Naive thymus-derived CD4-positive, alpha-beta T cell (primary cell): ENCODE measurements at regions of chr11 and their contacts with region 1.

Region 1: DNA sequence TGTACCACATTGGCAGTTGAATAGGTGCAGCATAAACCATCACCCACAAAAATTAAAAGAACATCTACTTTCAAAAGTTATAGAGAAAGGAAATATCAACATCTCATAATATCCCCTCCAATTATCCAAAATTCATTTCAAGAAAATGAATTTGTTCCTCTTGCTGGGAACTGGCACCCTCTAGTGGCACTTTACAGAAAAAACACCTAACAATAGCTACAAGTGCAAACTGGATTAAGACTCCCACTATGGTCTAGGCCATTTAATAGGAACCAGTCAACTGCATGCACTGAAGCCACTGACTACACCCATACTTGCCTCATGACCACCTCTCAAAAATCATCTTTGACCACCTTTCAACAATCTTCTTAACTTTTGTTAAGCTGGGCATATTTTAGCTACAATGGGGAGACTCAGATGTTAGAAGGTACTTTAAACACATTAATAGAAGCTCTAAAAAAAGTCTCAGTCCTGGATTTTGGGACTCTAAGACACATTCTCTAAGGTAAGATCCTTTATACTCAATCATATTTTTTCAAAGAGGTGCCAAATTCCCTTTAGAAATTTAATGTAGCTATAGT is 17.3 kb downstream of the TRAF6 start:
- DNase-seq: peak in 7 of 9 donors; percentile 11 to 48 (median 36)
- ATAC-seq: peak; percentile 81
- H3K4me3 ChIP-seq: no peak overlapping the region
- H3K4me3 Mint-ChIP-seq: no peak overlapping the region
- H3K27ac ChIP-seq: no peak overlapping the region
- H3K27ac Mint-ChIP-seq: peak overlapping the region in 4 of 9 donors; percentile 7 to 53 (median 44)
- H3K4me1 ChIP-seq: peaks cover 0 to 8% of the 10 kb centered on the region in 2 donors
- H3K4me1 Mint-ChIP-seq: peaks cover 17 to 42% (median 28%) of the 10 kb centered on the region in 7 donors
- H3K27me3 ChIP-seq: no peaks in the 10 kb centered on the region
- H3K27me3 Mint-ChIP-seq: no peaks in the 10 kb centered on the region

Region 2: DNA sequence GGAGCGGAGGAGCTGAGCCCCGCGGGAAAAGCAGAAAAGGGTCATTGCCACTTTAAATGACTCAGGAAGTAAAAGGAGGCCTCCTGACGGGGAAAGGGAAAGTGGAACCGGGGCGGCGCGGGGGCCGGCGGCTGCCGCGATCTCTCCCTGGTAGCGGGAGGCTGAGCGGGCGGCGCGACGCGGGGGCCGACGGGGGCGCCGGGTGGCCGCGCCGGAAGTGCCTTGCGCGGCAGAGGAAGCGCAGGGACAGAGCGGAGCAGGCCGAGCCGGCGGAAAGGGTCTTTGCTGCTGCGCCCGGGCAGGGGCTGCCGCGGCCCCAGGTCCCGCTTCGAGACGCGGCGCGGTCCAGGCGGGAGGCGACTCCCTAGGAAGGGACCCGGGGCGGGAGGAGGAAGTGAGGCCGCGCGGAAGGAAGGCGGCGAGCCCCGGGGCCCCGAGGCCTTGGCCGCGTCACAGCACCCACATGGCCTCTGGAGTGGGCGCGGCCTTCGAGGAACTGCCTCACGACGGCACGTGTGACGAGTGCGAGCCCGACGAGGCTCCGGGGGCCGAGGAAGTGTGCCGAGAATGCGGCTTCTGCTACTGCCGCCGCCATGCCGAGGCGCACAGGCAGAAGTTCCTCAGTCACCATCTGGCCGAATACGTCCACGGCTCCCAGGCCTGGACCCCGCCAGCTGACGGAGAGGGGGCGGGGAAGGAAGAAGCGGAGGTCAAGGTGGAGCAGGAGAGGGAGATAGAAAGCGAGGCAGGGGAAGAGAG is 830.0 kb before region 1 on chr11 and contains the start of gene TRIM44:
- CTCF ChIA-PET with region 1: no interaction called
- POLR2A ChIA-PET with region 1: no interaction called
- intact Hi-C with region 1: loop called in 1 of 2 experiments (anchors 5 kb)
- DNase-seq: peak; percentile 69 to 85 (median 82)
- ATAC-seq: peak; percentile 89
- H3K4me3 ChIP-seq: peak within 1 kb of the TSS; percentile 94
- H3K4me3 Mint-ChIP-seq: peak within 1 kb of the TSS; percentile 91 to 99 (median 95)
- H3K27ac ChIP-seq: peak within 1 kb of the TSS; percentile 94
- H3K27ac Mint-ChIP-seq: peak within 1 kb of the TSS; percentile 90 to 100 (median 96)
- H3K4me1 ChIP-seq: peaks cover 21 to 22% of the 10 kb centered on the region in 2 donors
- H3K4me1 Mint-ChIP-seq: peaks cover 24 to 61% (median 55%) of the 10 kb centered on the region in 7 donors
- H3K27me3 ChIP-seq: no peaks in the 10 kb centered on the region
- H3K27me3 Mint-ChIP-seq: peaks cover 0 to 22% (median 5%) of the 10 kb centered on the region in 5 donors
- total RNA-seq, gene TRIM44: 35.7 to 60.8 (median 58.6) TPM

Region 3: DNA sequence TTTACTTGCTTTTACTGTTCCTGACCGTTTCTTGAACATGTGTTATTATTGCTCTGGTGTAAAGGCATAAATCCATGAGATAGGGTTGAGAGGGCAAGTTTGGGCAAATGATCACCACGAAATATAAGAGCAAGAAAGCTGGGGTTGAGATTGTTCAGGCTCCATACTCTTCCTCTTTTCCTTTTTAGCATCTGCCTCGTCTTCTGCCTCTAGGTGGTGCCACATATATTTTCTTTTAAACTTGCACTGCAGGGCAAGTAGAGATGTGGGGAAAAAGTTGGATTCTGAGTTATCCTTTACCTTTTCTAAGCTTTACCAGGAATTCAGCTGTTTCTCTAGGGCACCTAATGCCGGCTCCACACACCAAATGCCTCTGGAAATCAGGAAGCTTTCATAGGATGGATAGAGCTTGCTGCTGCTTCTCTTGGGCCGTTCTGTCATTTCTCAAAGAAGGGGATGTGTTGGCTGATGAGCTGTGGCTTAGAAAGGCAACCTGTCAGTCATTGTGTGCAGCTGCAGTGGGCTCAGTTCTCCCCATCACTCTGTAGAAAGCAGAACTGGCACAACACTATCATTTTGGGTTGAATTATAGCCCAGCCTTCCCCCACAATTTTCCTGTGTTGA is 450.7 kb before region 1 on chr11:
- CTCF ChIA-PET with region 1: no interaction called
- POLR2A ChIA-PET with region 1: no interaction called
- intact Hi-C with region 1: loop called in 1 of 2 experiments (anchors 2 kb)
- DNase-seq: no peak
- ATAC-seq: no peak
- H3K4me3 ChIP-seq: no peak overlapping the region
- H3K4me3 Mint-ChIP-seq: no peak overlapping the region
- H3K27ac ChIP-seq: no peak overlapping the region
- H3K27ac Mint-ChIP-seq: no peak overlapping the region
- H3K4me1 ChIP-seq: no peaks in the 10 kb centered on the region
- H3K4me1 Mint-ChIP-seq: no peaks in the 10 kb centered on the region
- H3K27me3 ChIP-seq: no peaks in the 10 kb centered on the region
- H3K27me3 Mint-ChIP-seq: peaks cover 0 to 11% (median 9%) of the 10 kb centered on the region in 5 donors

Region 4: DNA sequence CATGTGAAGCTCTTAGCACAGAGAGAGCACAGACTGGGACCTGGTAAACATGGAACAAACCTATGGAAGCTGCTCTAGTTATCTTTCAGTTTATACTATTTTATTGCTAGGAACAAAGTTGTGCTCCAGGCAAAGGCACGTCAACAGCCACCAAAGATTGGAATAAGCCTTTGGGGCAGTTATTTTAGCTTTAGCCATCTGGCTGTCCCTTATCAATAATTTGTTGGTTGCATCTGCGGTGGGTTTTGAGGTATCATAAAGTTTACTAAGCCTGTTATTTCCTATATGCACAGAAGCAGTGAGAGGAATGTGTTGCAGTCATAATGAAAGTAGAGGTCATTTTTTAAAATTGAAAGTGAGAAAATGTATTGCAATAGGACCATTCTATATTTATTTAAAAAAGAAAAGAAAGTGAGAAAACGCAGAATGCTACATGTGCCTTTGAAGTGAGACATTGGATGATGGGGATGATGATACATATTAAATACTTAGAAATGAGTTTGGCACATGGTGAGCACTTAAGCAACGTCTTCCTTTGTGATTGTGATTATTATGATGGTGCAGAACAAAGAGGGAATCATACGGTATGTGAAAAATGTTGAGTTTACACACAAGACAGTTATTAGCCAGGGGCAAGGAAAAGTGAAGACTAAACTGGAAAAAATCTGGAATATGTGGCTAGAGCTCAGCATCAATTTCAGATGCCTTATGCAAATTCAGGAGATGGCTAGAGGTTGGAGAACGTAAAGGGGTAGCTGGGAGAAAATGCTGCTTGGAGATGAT is 138.4 kb before region 1 on chr11:
- CTCF ChIA-PET with region 1: no interaction called
- POLR2A ChIA-PET with region 1: no interaction called
- intact Hi-C with region 1: loop called (anchors 1 kb)
- DNase-seq: no peak
- ATAC-seq: no peak
- H3K4me3 ChIP-seq: no peak overlapping the region
- H3K4me3 Mint-ChIP-seq: peak overlapping the region in 1 of 10 donors; percentile 45
- H3K27ac ChIP-seq: no peak overlapping the region
- H3K27ac Mint-ChIP-seq: peak overlapping the region in 1 of 9 donors; percentile 18
- H3K4me1 ChIP-seq: peaks cover 0 to 36% of the 10 kb centered on the region in 2 donors
- H3K4me1 Mint-ChIP-seq: peaks cover 0 to 56% (median 4%) of the 10 kb centered on the region in 7 donors
- H3K27me3 ChIP-seq: no peaks in the 10 kb centered on the region
- H3K27me3 Mint-ChIP-seq: peaks cover 9 to 35% (median 25%) of the 10 kb centered on the region in 5 donors

Region 5: GRCh38 chr11:36509694-36510566 is 17.1 kb after region 1 on chr11 and contains the start of gene TRAF6:
- CTCF ChIA-PET with region 1: interaction called, 9 read pairs
- POLR2A ChIA-PET with region 1: no interaction called
- intact Hi-C with region 1: loop called (anchors 1 to 2 kb)
- DNase-seq: peak; percentile 75 to 95 (median 87)
- ATAC-seq: peak; percentile 99
- H3K4me3 ChIP-seq: peak within 1 kb of the TSS; percentile 82
- H3K4me3 Mint-ChIP-seq: peak within 1 kb of the TSS; percentile 89 to 99 (median 97)
- H3K27ac ChIP-seq: peak within 1 kb of the TSS; percentile 84
- H3K27ac Mint-ChIP-seq: peak within 1 kb of the TSS; percentile 87 to 98 (median 94)
- H3K4me1 ChIP-seq: peaks cover 5 to 13% of the 10 kb centered on the region in 2 donors
- H3K4me1 Mint-ChIP-seq: peaks cover 21 to 42% (median 31%) of the 10 kb centered on the region in 7 donors
- H3K27me3 ChIP-seq: no peaks in the 10 kb centered on the region
- H3K27me3 Mint-ChIP-seq: peaks cover 3 to 23% (median 9%) of the 10 kb centered on the region in 5 donors
- total RNA-seq, gene TRAF6: 14.7 to 22.2 (median 20.6) TPM